ENCODE measurements at regions of chr4 and their contacts with region 1.

Region 1: GRCh38 chr4:9771034-9771433 is 10.4 kb upstream of the DRD5 start:
- DNase-seq: peak; percentile 16
- H3K4me3 Mint-ChIP-seq: no peak overlapping the region
- H3K27ac Mint-ChIP-seq: no peak overlapping the region
- H3K4me1 Mint-ChIP-seq: no peaks in the 10 kb centered on the region
- H3K27me3 Mint-ChIP-seq: peaks cover 19% of the 10 kb centered on the region

Region 2: GRCh38 chr4:9816285-9816684 is 45.3 kb after region 1 on chr4:
- CTCF ChIA-PET with region 1: no interaction called
- POLR2A ChIA-PET with region 1: no interaction called
- intact Hi-C with region 1: loop called (anchors 1 kb)
- DNase-seq: no peak
- H3K4me3 Mint-ChIP-seq: no peak overlapping the region
- H3K27ac Mint-ChIP-seq: no peak overlapping the region
- H3K4me1 Mint-ChIP-seq: peaks cover 4% of the 10 kb centered on the region
- H3K27me3 Mint-ChIP-seq: peaks cover 22% of the 10 kb centered on the region

Region 3: GRCh38 chr4:9825049-9825448 is 54.0 kb after region 1 on chr4:
- CTCF ChIA-PET with region 1: no interaction called
- POLR2A ChIA-PET with region 1: no interaction called
- intact Hi-C with region 1: loop called (anchors 2 kb)
- DNase-seq: peak; percentile 65
- H3K4me3 Mint-ChIP-seq: no peak overlapping the region
- H3K27ac Mint-ChIP-seq: no peak overlapping the region
- H3K4me1 Mint-ChIP-seq: peaks cover 12% of the 10 kb centered on the region
- H3K27me3 Mint-ChIP-seq: peaks cover 9% of the 10 kb centered on the region

Measured in activated CD4-positive, alpha-beta memory T cell treated with anti-CD3 and anti-CD28 coated beads for 36 hours (primary cell).